Esophagus muscularis mucosa (tissue), 4 donors: ENCODE measurements at regions of chr21 and their contacts with region 1.

Region 1: GRCh38 chr21:37845535-37845934 is 70.7 kb downstream of the KCNJ6 start:
- DNase-seq: peak; percentile 80
- H3K4me3 ChIP-seq: no peak overlapping the region
- H3K27ac ChIP-seq: no peak overlapping the region
- H3K4me1 ChIP-seq: no peaks in the 10 kb centered on the region
- H3K27me3 ChIP-seq: peaks cover 0 to 14% (median 0%) of the 10 kb centered on the region in 4 donors
- CTCF ChIP-seq: no peak
- EP300 ChIP-seq: no peak
- POLR2A ChIP-seq: no peak

Region 2: GRCh38 chr21:37686991-37687810 is 158.3 kb before region 1 on chr21:
- intact Hi-C with region 1: no loop called
- DNase-seq: no peak
- H3K4me3 ChIP-seq: no peak overlapping the region
- H3K27ac ChIP-seq: no peak overlapping the region
- H3K4me1 ChIP-seq: peaks cover 0 to 7% (median 0%) of the 10 kb centered on the region in 4 donors
- H3K27me3 ChIP-seq: no peaks in the 10 kb centered on the region
- CTCF ChIP-seq: no peak
- EP300 ChIP-seq: no peak
- POLR2A ChIP-seq: no peak

Region 3: GRCh38 chr21:37888659-37889058 is 43.1 kb after region 1 on chr21:
- intact Hi-C with region 1: loop called (anchors 2 kb)
- DNase-seq: no peak
- H3K4me3 ChIP-seq: no peak overlapping the region
- H3K27ac ChIP-seq: no peak overlapping the region
- H3K4me1 ChIP-seq: no peaks in the 10 kb centered on the region
- H3K27me3 ChIP-seq: peaks cover 0 to 19% (median 0%) of the 10 kb centered on the region in 4 donors
- CTCF ChIP-seq: no peak
- EP300 ChIP-seq: no peak
- POLR2A ChIP-seq: no peak